ENCODE measurements at regions of chr15 and their contacts with region 1.

Region 1: DNA sequence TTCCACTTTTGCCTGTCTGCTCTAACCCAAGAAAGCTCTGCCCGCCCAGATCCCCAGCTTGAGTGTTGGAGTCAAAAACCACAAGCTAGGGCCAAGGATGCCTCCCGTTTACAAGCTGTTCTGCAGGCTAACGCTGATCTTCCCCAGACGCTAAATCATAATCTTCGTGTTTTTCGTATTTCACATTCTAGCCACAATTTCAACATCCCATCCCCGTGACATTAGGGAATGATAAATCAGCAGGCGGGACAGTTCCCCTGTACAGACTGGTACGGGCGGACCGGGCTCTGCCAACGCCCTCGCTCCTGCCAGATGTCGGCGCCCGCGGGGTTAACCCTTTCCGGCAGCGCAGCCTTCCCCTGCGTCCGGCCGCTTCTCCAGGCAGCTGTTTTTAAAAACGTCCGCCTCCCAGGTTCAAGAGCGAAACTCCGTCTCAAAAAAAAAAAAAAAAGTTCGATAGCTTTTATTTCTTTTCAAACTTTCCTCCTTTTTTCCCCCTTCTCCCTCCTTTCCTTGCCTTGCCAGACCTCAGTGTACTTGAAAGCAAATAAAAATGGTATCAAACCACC is 81.0 kb upstream of the BNC1 start:
- DNase-seq: peak in 9 of 10 donors; percentile 37 to 75 (median 59)
- H3K4me3 ChIP-seq: peak overlapping the region in 58 of 59 donors; percentile 1 to 69 (median 43)
- H3K27ac ChIP-seq: peak overlapping the region in 58 of 59 donors; percentile 46 to 98 (median 88)
- H3K27me3 ChIP-seq: peaks cover 0 to 42% (median 9%) of the 10 kb centered on the region in 45 donors
- CTCF ChIP-seq: peak in 6 of 56 donors; percentile 6 to 21 (median 10)

Region 2: GRCh38 chr15:83207622-83208411 is 157.6 kb before region 1 on chr15 and contains the start of gene HDGFL3:
- intact Hi-C with region 1: loop called in 1 of 2 experiments (anchors 5 kb)
- DNase-seq: peak; percentile 39 to 78 (median 62)
- H3K4me3 ChIP-seq: peak within 1 kb of the TSS; percentile 61 to 96 (median 86)
- H3K27ac ChIP-seq: peak within 1 kb of the TSS in 58 of 59 donors; percentile 46 to 95 (median 87)
- H3K27me3 ChIP-seq: no peaks in the 10 kb centered on the region
- CTCF ChIP-seq: peak in 4 of 56 donors; percentile 8 to 26 (median 12)
- total RNA-seq, gene HDGFL3: 80.3 to 166 (median 119) TPM

Measured in dorsolateral prefrontal cortex (tissue), 120 donors.